B cell (primary cell): ENCODE measurements at regions of chr15 and their contacts with region 1.

Region 1: GRCh38 chr15:92979011-92979701 is 79.0 kb downstream of the CHD2 start:
- DNase-seq: peak; percentile 18
- ATAC-seq: peak; percentile 47
- H3K4me3 ChIP-seq: no peak overlapping the region
- H3K4me3 Mint-ChIP-seq: no peak overlapping the region
- H3K27ac ChIP-seq: peak overlapping the region in 1 of 2 donors; percentile 24
- H3K27ac Mint-ChIP-seq: peak overlapping the region; percentile 47
- H3K4me1 ChIP-seq: no peaks in the 10 kb centered on the region
- H3K4me1 Mint-ChIP-seq: peaks cover 5% of the 10 kb centered on the region
- H3K27me3 ChIP-seq: no peaks in the 10 kb centered on the region
- H3K27me3 Mint-ChIP-seq: no peaks in the 10 kb centered on the region
- CTCF ChIP-seq: no peak

Region 2: DNA sequence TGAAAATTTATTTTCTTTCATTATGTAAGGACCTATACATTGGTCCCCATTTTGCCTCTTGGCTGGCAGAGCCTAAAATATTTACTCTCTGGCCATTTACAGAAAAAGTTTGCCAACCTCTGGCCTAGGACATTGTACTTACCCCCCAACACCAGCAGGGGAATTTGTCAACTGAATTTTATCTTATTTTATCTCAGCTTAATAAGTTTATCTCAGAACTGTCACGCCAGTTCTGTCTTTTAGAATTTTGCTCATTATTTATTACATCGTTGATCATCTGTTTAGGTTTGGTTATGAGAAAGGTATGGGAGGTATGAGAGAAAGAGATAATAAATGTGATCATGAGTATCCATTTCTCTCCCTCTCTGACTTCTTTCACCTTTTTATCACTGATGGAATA is 40.8 kb before region 1 on chr15:
- CTCF ChIA-PET with region 1: interaction called, 3 read pairs
- POLR2A ChIA-PET with region 1: no interaction called
- intact Hi-C with region 1: loop called (anchors 5 kb)
- DNase-seq: no peak
- ATAC-seq: no peak
- H3K4me3 ChIP-seq: no peak overlapping the region
- H3K4me3 Mint-ChIP-seq: no peak overlapping the region
- H3K27ac ChIP-seq: peak overlapping the region in 1 of 2 donors; percentile 6
- H3K27ac Mint-ChIP-seq: no peak overlapping the region
- H3K4me1 ChIP-seq: peaks cover 0 to 5% of the 10 kb centered on the region in 2 donors
- H3K4me1 Mint-ChIP-seq: peaks cover 9% of the 10 kb centered on the region
- H3K27me3 ChIP-seq: no peaks in the 10 kb centered on the region
- H3K27me3 Mint-ChIP-seq: no peaks in the 10 kb centered on the region
- CTCF ChIP-seq: peak; percentile 55

Region 3: GRCh38 chr15:92989470-92989869 is 10.3 kb after region 1 on chr15:
- CTCF ChIA-PET with region 1: interaction called, 3 read pairs
- POLR2A ChIA-PET with region 1: no interaction called
- intact Hi-C with region 1: loop called (anchors 2 kb)
- DNase-seq: no peak
- ATAC-seq: no peak
- H3K4me3 ChIP-seq: no peak overlapping the region
- H3K4me3 Mint-ChIP-seq: no peak overlapping the region
- H3K27ac ChIP-seq: no peak overlapping the region
- H3K27ac Mint-ChIP-seq: peak overlapping the region; percentile 21
- H3K4me1 ChIP-seq: peaks cover 0 to 11% of the 10 kb centered on the region in 2 donors
- H3K4me1 Mint-ChIP-seq: peaks cover 11% of the 10 kb centered on the region
- H3K27me3 ChIP-seq: no peaks in the 10 kb centered on the region
- H3K27me3 Mint-ChIP-seq: no peaks in the 10 kb centered on the region
- CTCF ChIP-seq: no peak

Region 4: DNA sequence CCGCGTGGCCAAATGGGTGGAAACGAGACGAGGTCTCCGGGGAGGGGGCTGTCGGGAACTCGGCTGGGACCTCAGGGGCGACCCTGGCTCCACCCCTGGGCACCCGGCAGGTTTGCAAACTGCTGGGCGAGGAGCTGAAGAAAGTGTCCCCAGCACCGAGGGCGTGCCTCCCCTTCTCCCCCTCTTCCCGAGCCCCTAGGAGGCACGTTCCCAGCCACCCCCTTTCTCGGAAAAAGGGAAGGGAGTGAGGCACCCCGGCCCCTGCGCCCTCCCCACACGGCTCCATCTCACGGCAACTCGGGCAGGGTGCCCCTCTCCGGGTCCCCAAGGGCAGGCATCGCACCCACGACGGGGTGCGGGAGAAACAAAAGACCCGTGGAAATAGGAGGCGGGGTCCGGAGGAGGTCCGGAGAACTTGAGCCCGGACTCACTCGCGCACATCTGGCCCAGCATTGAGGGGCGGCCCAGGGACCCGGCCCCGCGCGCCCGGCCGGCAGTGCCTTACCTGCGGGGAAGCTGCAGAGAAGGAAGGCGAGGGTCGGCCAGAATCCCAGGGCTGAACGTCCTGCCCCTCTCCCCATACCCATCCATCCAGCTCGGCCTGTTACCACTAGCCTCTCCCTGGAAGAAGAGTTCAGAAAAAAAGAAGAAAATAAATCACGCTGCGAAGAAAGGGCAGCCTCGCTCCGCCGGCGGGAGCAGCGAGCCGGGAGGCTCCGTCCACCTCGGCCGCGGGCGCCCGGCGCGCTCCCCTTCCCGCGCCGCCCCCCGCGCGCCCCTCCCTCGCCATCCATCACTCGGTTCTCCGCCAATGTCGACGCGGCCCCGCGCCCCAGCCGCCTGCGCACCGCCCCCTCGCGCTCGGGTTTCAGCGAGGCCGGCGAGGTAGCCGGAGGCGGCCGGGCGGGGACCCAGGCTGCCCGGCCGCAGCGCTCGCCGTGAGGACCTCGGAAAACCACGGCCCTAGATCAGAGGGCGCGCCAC is 93.5 kb after region 1 on chr15:
- CTCF ChIA-PET with region 1: no interaction called
- POLR2A ChIA-PET with region 1: no interaction called
- intact Hi-C with region 1: no loop called
- DNase-seq: no peak
- ATAC-seq: no peak
- H3K4me3 ChIP-seq: no peak overlapping the region
- H3K4me3 Mint-ChIP-seq: peak overlapping the region; percentile 67
- H3K27ac ChIP-seq: no peak overlapping the region
- H3K27ac Mint-ChIP-seq: no peak overlapping the region
- H3K4me1 ChIP-seq: peaks cover 5 to 11% of the 10 kb centered on the region in 2 donors
- H3K4me1 Mint-ChIP-seq: peaks cover 13% of the 10 kb centered on the region
- H3K27me3 ChIP-seq: peaks cover 0 to 37% (median 11%) of the 10 kb centered on the region in 4 experiments
- H3K27me3 Mint-ChIP-seq: peaks cover 68% of the 10 kb centered on the region
- CTCF ChIP-seq: no peak